ENCODE measurements at regions of chr6 and their contacts with region 1.

Region 1: DNA sequence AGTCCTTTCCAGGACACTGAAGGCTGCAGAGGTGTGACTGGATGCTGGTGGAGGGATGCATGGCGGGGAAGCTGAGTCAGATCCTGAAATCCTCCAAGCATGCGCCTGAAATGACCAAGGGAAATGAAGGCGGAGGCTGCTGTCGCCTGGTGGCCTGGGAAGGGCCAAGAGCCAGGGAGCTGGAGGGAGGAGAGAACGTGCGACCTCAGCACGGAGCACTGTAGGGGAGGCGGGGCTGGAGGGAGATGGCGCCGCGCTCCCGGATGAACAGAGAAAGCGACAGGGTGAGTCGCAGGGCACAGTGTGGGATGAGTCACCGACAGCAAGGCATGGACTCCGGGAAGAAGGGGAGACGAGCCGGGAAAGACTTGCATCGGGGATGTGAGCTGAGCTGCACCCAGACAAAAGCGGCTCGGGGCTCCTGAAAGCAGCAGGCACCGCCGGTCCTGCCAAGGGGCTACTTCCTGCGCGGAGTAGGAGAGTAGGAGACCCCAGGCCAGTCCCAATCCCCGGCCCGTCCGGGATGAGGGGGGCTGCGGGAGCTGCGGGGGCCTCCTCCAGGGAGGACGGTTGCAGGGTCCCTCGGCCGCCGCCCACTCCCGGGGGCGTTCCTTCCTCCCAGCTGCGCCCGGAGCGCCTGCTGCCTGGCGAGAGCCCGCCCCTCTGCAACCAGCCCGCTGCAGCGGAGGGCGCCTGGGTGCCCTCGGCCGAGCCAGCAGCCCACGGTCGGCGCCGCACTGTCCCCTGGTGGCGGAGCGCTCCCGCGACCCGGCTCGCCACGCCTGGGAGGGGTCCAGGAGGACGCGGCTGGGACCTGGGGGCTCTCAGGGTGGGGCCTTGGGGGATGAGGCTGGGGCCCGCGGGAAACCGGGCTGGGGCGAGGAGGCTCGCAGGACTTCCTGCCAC is 11.0 kb upstream of the NQO2 start:
- DNase-seq: peak; percentile 74
- H3K4me3 Mint-ChIP-seq: peak overlapping the region; percentile 92
- H3K27ac Mint-ChIP-seq: peak overlapping the region; percentile 97
- H3K4me1 Mint-ChIP-seq: peaks cover 32% of the 10 kb centered on the region
- H3K27me3 Mint-ChIP-seq: peaks cover 4% of the 10 kb centered on the region

Region 2: GRCh38 chr6:2765166-2765895 is 223.3 kb before region 1 on chr6 and contains the start of gene WRNIP1:
- intact Hi-C with region 1: loop called (anchors 1 kb)
- DNase-seq: peak; percentile 95
- H3K4me3 Mint-ChIP-seq: peak within 1 kb of the TSS; percentile 96
- H3K27ac Mint-ChIP-seq: peak within 1 kb of the TSS; percentile 98
- H3K4me1 Mint-ChIP-seq: peaks cover 52% of the 10 kb centered on the region
- H3K27me3 Mint-ChIP-seq: no peaks in the 10 kb centered on the region
- total RNA-seq, gene WRNIP1: 47.5 and 51.3 TPM in 2 replicates

Region 3: DNA sequence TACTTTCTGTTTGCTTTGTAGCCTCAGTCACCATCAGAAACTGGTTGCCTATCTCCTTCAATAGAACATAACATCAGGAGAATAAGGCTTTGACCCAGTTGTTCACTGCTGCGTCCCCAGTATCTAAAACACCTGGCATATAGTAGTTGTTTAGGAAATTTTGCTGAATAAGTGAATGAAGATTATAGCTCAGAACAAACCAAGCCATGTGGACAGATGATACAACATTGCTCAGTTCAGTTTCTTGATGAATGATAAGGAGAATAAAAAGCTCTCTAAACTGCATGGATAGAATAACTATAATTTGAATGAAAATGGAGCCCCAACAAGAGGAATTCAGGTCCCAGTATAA is 141.8 kb before region 1 on chr6:
- intact Hi-C with region 1: loop called (anchors 1 kb)
- DNase-seq: no peak
- H3K4me3 Mint-ChIP-seq: peak overlapping the region; percentile 31
- H3K27ac Mint-ChIP-seq: peak overlapping the region; percentile 41
- H3K4me1 Mint-ChIP-seq: peaks cover 60% of the 10 kb centered on the region
- H3K27me3 Mint-ChIP-seq: no peaks in the 10 kb centered on the region

Region 4: DNA sequence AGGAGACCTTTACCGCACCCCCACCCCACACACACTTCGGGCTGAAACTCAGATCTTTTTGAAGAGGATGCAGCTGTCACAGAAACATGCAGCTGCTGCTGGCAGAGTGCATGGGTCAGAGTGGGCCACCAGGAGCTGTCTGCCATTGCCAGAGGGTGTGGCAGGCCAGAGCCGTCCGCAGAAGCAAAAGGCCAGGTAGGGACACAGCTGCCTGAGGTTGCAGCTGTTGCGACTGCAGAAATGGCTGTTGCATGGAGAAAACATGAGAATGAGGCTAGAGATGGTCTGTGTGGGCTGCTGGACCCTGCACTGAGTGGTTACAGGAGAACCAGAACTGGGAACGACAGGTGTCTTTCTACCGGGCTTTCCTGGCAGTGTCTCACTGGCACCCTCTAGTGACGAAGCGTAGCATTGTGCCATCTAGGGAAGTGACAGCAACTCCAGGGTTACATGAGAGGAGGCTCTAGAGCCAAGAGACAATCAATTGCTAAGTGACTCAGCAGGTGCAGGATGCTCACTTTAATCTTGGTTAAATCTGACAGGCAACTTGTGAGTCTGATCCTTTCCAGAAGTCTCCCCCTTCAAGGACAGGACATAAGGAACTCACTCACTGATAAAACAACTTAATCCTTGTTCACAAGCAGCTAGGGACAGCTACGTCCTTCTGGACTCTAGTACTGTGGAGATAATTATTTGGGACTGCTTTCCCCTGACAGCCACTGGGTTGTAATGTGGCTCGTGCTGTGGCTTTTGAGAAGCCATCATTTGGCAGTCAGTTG is 56.5 kb before region 1 on chr6:
- intact Hi-C with region 1: loop called (anchors 1 kb)
- DNase-seq: peak; percentile 81
- H3K4me3 Mint-ChIP-seq: no peak overlapping the region
- H3K27ac Mint-ChIP-seq: peak overlapping the region; percentile 64
- H3K4me1 Mint-ChIP-seq: peaks cover 25% of the 10 kb centered on the region
- H3K27me3 Mint-ChIP-seq: peaks cover 6% of the 10 kb centered on the region

Region 5: GRCh38 chr6:2971420-2972218 is 17.1 kb before region 1 on chr6 and contains the start of gene SERPINB6:
- intact Hi-C with region 1: loop called (anchors 1 kb)
- DNase-seq: peak; percentile 23
- H3K4me3 Mint-ChIP-seq: peak within 1 kb of the TSS; percentile 85
- H3K27ac Mint-ChIP-seq: peak within 1 kb of the TSS; percentile 83
- H3K4me1 Mint-ChIP-seq: peaks cover 16% of the 10 kb centered on the region
- H3K27me3 Mint-ChIP-seq: peaks cover 40% of the 10 kb centered on the region
- total RNA-seq, gene SERPINB6: 33.7 and 34.9 TPM in 2 replicates

Region 6: GRCh38 chr6:3209114-3210023 is 220.7 kb after region 1 on chr6:
- intact Hi-C with region 1: loop called (anchors 1 kb)
- DNase-seq: no peak
- H3K4me3 Mint-ChIP-seq: peak overlapping the region; percentile 43
- H3K27ac Mint-ChIP-seq: peak overlapping the region; percentile 89
- H3K4me1 Mint-ChIP-seq: peaks cover 41% of the 10 kb centered on the region
- H3K27me3 Mint-ChIP-seq: peaks cover 23% of the 10 kb centered on the region

Measured in activated T-helper 1 cell treated with anti-CD3 and anti-CD28 coated beads, Interleukin-12 subunit alpha, Interleukin-12 subunit beta, Interleukin-2, Interleukin-4 antibody, amounts not matched to agents 30 ng/mL and 10 ng/mL and 1 ng/mL, durations not matched to agents 14 hours and 24 hours and 36 hours (primary cell).